AG04450 (cell line): ENCODE measurements at regions of chr11 and their contacts with region 1.

Region 1: GRCh38 chr11:130131961-130132850 is 27.4 kb upstream of the ST14 start:
- DNase-seq: peak; percentile 37
- H3K4me3 ChIP-seq: no peak overlapping the region
- H3K27ac ChIP-seq: no peak overlapping the region
- H3K27me3 ChIP-seq: no peaks in the 10 kb centered on the region
- CTCF ChIP-seq: peak; percentile 88

Region 2: DNA sequence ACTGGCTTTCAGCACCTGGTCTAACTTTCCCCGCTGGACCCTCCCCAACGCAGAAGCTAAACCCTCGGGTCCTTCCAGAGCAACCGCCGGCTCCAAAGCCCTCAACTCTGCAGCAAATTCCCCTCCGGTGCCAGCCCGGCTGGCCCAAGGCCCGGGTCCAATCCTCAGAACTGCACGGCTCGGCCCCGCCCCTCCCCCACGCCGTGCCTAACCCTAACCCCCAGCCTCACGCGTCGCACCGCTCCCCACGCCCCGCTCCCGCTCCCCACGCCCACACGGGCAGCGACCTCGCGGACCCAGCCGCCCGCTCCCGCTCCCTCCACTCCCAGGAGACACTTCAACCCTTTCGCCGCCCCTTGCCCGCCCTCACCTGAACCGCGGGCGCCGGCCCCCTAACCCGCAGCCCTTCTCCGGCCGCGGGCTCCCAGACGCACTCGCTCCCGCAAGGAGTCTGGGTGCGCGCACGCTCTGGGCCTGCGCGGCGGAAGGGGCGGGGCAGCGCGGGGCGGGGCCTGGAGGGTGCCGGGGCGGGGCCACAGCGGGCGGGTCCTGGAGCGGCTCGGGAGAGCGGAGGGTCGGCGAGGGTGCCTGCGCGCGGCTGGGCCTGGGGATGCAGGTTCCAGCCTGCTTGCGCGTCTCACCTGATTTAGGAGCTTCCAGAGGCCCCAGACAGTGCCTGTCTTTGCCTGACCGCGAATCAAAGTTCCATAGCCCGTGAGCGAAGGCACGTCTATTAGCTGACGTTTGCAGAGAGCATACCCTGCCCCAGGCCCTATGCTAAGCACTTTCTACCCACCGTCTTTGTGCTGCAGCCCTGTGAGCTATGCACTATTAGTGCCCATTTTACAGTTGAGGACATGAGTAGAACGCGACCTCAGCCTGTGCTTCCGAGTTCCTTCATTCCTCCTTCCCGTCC is 236.8 kb before region 1 on chr11 and contains the start of gene NFRKB:
- CTCF ChIA-PET with region 1: interaction called, 32 read pairs
- POLR2A ChIA-PET with region 1: no interaction called
- DNase-seq: no peak
- H3K4me3 ChIP-seq: peak within 1 kb of the TSS; percentile 68
- H3K27ac ChIP-seq: no peak within 1 kb of the TSS
- H3K27me3 ChIP-seq: no peaks in the 10 kb centered on the region
- CTCF ChIP-seq: no peak
- polyA plus RNA-seq, gene NFRKB: 12.7 TPM in 2 replicates

Region 3: GRCh38 chr11:129930296-129930695 is 201.9 kb before region 1 on chr11:
- CTCF ChIA-PET with region 1: interaction called, 395 read pairs
- POLR2A ChIA-PET with region 1: interaction called, 3 read pairs
- DNase-seq: no peak
- H3K4me3 ChIP-seq: no peak overlapping the region
- H3K27ac ChIP-seq: no peak overlapping the region
- H3K27me3 ChIP-seq: no peaks in the 10 kb centered on the region
- CTCF ChIP-seq: no peak

Region 4: DNA sequence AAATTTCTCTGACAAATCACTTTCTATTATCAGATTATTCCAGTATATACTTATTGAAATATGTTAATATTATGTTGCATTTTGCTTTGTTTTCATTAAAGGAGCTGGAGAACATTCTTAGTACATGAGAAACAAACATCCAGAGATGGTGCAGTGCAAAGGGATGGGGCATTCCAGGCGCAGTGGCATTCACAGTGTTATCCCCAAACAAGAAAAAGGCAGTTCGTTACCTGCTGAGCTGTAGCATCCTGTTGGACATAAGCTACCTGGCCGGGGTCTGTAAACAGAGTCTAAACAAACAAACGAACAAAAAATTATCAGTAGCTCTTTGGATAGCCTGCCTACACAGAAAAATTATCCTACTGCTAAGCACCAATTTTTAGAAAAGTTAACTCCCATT is 176.9 kb before region 1 on chr11:
- CTCF ChIA-PET with region 1: interaction called, 14 read pairs
- POLR2A ChIA-PET with region 1: no interaction called
- DNase-seq: no peak
- H3K4me3 ChIP-seq: no peak overlapping the region
- H3K27ac ChIP-seq: no peak overlapping the region
- H3K27me3 ChIP-seq: no peaks in the 10 kb centered on the region
- CTCF ChIP-seq: no peak

Region 5: GRCh38 chr11:130002846-130003716 is 129.1 kb before region 1 on chr11:
- CTCF ChIA-PET with region 1: interaction called, 16 read pairs
- POLR2A ChIA-PET with region 1: interaction called, 19 read pairs
- DNase-seq: peak; percentile 94
- H3K4me3 ChIP-seq: peak overlapping the region; percentile 75
- H3K27ac ChIP-seq: peak overlapping the region; percentile 99
- H3K27me3 ChIP-seq: no peaks in the 10 kb centered on the region
- CTCF ChIP-seq: no peak

Region 6: DNA sequence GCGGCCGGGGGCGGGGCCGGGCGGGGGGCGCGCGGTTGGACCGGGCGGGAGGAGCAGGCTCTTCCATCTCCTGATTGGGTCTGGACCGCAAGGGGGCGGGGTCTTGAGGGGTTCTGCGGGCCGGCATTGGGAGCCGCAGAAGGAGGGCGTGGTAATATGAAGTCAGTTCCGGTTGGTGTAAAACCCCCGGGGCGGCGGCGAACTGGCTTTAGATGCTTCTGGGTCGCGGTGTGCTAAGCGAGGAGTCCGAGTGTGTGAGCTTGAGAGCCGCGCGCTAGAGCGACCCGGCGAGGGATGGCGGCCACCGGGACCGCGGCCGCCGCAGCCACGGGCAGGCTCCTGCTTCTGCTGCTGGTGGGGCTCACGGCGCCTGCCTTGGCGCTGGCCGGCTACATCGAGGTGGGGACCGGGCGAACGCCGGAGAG is 62.5 kb before region 1 on chr11 and contains the start of gene APLP2:
- CTCF ChIA-PET with region 1: interaction called, 23 read pairs
- POLR2A ChIA-PET with region 1: no interaction called
- DNase-seq: peak; percentile 94
- H3K4me3 ChIP-seq: peak within 1 kb of the TSS; percentile 78
- H3K27ac ChIP-seq: peak within 1 kb of the TSS; percentile 59
- H3K27me3 ChIP-seq: no peaks in the 10 kb centered on the region
- CTCF ChIP-seq: no peak
- polyA plus RNA-seq, gene APLP2: 238 and 273 TPM in 2 replicates

Region 7: DNA sequence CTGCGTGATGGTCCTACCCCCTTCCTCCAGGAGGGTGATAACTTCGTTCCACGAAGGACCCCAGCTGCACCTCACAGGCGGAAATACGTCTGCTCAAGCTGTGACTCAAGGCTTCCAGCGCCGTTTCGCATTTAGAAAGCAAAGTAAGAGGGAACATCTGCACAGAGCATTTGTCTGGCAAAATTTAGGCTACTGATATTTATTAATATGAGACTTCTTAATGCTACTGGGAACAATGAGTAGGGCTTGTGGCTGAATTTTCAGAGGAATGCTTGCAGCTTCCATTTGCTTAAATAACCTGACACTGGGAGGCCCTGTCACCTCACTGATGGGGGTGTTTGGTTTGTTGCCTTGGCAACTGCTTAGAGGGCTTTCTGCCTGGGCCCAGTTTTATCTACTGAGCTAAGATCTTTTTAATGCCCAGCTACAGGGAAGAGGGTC is 12.7 kb after region 1 on chr11:
- CTCF ChIA-PET with region 1: interaction called, 11 read pairs
- POLR2A ChIA-PET with region 1: no interaction called
- DNase-seq: no peak
- H3K4me3 ChIP-seq: no peak overlapping the region
- H3K27ac ChIP-seq: no peak overlapping the region
- H3K27me3 ChIP-seq: no peaks in the 10 kb centered on the region
- CTCF ChIP-seq: no peak